Transverse colon (tissue), 4 donors: ENCODE measurements at regions of chr18 and their contacts with region 1.

Region 1: GRCh38 chr18:65057439-65058083 is 693.3 kb upstream of the CDH7 start:
- DNase-seq: no peak
- H3K4me3 ChIP-seq: no peak overlapping the region
- H3K27ac ChIP-seq: no peak overlapping the region
- H3K4me1 ChIP-seq: no peaks in the 10 kb centered on the region
- H3K27me3 ChIP-seq: no peaks in the 10 kb centered on the region
- CTCF ChIP-seq: no peak
- EP300 ChIP-seq: no peak
- POLR2A ChIP-seq: no peak

Region 2: GRCh38 chr18:65082907-65083306 is 25.3 kb after region 1 on chr18:
- in situ Hi-C with region 1: no loop called
- intact Hi-C with region 1: loop called (anchors 1 kb)
- DNase-seq: no peak
- H3K4me3 ChIP-seq: no peak overlapping the region
- H3K27ac ChIP-seq: no peak overlapping the region
- H3K4me1 ChIP-seq: no peaks in the 10 kb centered on the region
- H3K27me3 ChIP-seq: no peaks in the 10 kb centered on the region
- CTCF ChIP-seq: no peak
- EP300 ChIP-seq: no peak
- POLR2A ChIP-seq: no peak